ENCODE measurements at regions of chr18 and their contacts with region 1.

Region 1: GRCh38 chr18:78962098-78962497 is 17.5 kb upstream of the SALL3 start:
- DNase-seq: no peak
- H3K4me3 ChIP-seq: no peak overlapping the region
- H3K27ac ChIP-seq: no peak overlapping the region
- H3K4me1 ChIP-seq: no peaks in the 10 kb centered on the region
- H3K27me3 ChIP-seq: no peaks in the 10 kb centered on the region
- CTCF ChIP-seq: no peak

Region 2: DNA sequence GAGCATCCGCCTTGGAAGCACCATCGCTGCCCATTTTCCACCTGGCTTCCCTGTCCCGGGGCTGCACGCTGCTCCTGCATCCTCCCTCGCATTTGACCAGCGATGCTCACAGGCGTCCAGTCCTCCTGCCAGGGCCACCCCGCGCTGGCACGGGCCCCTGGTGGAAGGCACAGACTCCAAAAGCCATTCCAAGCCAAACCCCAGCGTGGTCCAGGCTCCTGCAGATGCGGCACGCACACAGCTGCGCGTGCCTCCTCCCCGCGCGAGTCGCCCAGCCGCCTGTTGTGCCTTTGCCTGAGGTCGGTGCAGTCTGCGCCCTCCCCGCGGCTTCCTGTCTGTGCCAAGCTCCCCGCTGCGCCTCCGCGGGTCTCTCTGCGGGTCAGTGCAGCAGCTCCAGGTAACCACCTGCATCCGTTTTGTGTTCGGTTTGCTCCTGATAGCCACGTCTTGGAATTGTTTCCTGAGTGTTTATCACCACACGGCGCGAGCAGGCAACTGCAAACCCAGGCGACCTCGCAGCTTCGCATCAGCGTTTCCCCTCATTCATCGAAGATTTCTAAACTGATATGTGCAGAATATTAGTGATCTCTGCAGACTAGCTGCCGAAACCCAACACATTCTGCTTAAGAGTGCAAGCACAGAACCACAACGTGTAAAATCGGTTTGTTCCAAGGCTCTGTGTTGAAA is 47.7 kb before region 1 on chr18:
- dilution Hi-C with region 1: loop called (anchors 5 kb)
- DNase-seq: no peak
- H3K4me3 ChIP-seq: no peak overlapping the region
- H3K27ac ChIP-seq: no peak overlapping the region
- H3K4me1 ChIP-seq: no peaks in the 10 kb centered on the region
- H3K27me3 ChIP-seq: no peaks in the 10 kb centered on the region
- CTCF ChIP-seq: no peak

Region 3: GRCh38 chr18:79186649-79187048 is 224.6 kb after region 1 on chr18:
- dilution Hi-C with region 1: no loop called
- DNase-seq: no peak
- H3K4me3 ChIP-seq: no peak overlapping the region
- H3K27ac ChIP-seq: no peak overlapping the region
- H3K4me1 ChIP-seq: no peaks in the 10 kb centered on the region
- H3K27me3 ChIP-seq: no peaks in the 10 kb centered on the region
- CTCF ChIP-seq: no peak

Measured in keratinocyte (primary cell).